ENCODE measurements at regions of chr12 and their contacts with region 1.

Region 1: GRCh38 chr12:40446385-40446784 is 221.6 kb downstream of the LRRK2 start:
- DNase-seq: no peak
- H3K4me3 Mint-ChIP-seq: no peak overlapping the region
- H3K27ac Mint-ChIP-seq: no peak overlapping the region
- H3K4me1 Mint-ChIP-seq: no peaks in the 10 kb centered on the region
- H3K27me3 Mint-ChIP-seq: no peaks in the 10 kb centered on the region

Region 2: GRCh38 chr12:40911676-40912075 is 465.3 kb after region 1 on chr12:
- CTCF ChIA-PET with region 1: no interaction called
- intact Hi-C with region 1: loop called (anchors 10 kb)
- DNase-seq: no peak
- H3K4me3 Mint-ChIP-seq: no peak overlapping the region
- H3K27ac Mint-ChIP-seq: no peak overlapping the region
- H3K4me1 Mint-ChIP-seq: no peaks in the 10 kb centered on the region
- H3K27me3 Mint-ChIP-seq: no peaks in the 10 kb centered on the region

Measured in activated naive CD4-positive, alpha-beta T cell treated with anti-CD3 and anti-CD28 coated beads for 36 hours (primary cell).